ENCODE measurements at regions of chrX and their contacts with region 1.

Region 1: DNA sequence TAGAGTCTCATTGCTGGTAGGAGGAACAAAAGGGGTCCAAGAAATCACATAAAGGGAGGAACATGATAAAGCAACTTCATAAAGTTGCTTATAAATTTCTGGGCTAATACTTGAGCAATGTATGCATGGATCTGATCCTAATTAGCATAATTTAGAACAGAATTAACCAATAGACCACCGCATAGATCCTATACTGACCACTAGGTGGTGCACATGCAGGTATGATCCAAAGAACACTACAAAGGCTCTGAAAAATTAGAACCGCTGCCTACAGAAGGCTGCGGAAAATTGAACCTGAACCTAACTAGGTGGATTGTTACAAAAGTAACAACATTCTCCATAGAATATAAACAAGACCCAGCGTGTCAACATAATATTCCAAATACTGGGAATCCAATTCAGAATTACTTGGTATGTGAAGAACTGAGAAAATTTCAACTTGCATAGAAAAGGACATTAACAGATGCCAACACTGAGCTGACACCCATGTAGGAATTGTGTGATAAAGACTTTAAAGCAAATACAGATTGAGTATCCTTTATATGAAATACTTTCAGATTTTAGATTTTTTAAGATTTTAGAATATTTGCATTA is 23.3 kb downstream of the BRCC3 start:
- DNase-seq: peak in 8 of 14 experiments; percentile 1 to 69 (median 34)
- ATAC-seq: peak; percentile 88
- H3K4me3 ChIP-seq: no peak overlapping the region
- H3K4me3 Mint-ChIP-seq: no peak overlapping the region
- H3K27ac ChIP-seq: no peak overlapping the region
- H3K27ac Mint-ChIP-seq: no peak overlapping the region
- H3K4me1 ChIP-seq: no peaks in the 10 kb centered on the region
- H3K4me1 Mint-ChIP-seq: peaks cover 6% of the 10 kb centered on the region
- H3K27me3 ChIP-seq: no peaks in the 10 kb centered on the region
- H3K27me3 Mint-ChIP-seq: no peaks in the 10 kb centered on the region
- CTCF ChIP-seq: peak; percentile 72

Region 2: DNA sequence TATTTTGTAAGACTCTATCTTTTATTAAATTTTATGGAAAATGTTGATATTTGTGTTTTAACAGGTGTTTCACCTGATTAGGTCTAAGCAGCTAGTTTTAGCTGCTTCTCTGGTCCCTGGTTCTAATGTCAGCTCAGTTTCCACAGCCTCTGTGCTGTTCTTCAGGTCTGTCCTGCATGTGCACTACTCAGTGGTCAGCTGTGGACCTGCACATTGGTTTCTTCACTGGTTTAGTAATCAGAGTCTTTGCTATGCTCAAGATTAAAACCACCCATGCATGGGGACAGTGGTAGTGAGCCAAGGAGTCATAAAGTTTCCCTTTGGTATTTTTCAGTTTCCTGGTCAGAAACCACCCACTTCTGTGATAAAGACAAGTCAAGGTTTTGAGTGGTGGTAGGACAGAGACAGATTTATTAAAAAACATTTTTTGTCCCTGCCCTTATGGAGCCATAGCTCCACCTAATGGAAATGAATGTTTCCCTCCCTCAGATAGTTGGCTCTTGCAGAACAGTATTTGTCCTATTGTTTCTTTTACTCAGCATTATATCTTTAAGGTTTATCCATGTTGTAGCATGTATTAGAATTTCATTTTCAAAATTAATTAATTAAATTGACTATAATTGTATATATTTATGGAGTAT is 84.9 kb after region 1 on chrX:
- CTCF ChIA-PET with region 1: no interaction called
- POLR2A ChIA-PET with region 1: no interaction called
- intact Hi-C with region 1: loop called in 1 of 2 experiments (anchors 10 kb)
- DNase-seq: no peak
- ATAC-seq: no peak
- H3K4me3 ChIP-seq: no peak overlapping the region
- H3K4me3 Mint-ChIP-seq: no peak overlapping the region
- H3K27ac ChIP-seq: no peak overlapping the region
- H3K27ac Mint-ChIP-seq: no peak overlapping the region
- H3K4me1 ChIP-seq: no peaks in the 10 kb centered on the region
- H3K4me1 Mint-ChIP-seq: no peaks in the 10 kb centered on the region
- H3K27me3 ChIP-seq: no peaks in the 10 kb centered on the region
- H3K27me3 Mint-ChIP-seq: no peaks in the 10 kb centered on the region
- CTCF ChIP-seq: no peak

Measured in CD4-positive, alpha-beta T cell (primary cell).